SK-N-SH (cell line): ENCODE measurements at regions of chr1 and their contacts with region 1.

Region 1: DNA sequence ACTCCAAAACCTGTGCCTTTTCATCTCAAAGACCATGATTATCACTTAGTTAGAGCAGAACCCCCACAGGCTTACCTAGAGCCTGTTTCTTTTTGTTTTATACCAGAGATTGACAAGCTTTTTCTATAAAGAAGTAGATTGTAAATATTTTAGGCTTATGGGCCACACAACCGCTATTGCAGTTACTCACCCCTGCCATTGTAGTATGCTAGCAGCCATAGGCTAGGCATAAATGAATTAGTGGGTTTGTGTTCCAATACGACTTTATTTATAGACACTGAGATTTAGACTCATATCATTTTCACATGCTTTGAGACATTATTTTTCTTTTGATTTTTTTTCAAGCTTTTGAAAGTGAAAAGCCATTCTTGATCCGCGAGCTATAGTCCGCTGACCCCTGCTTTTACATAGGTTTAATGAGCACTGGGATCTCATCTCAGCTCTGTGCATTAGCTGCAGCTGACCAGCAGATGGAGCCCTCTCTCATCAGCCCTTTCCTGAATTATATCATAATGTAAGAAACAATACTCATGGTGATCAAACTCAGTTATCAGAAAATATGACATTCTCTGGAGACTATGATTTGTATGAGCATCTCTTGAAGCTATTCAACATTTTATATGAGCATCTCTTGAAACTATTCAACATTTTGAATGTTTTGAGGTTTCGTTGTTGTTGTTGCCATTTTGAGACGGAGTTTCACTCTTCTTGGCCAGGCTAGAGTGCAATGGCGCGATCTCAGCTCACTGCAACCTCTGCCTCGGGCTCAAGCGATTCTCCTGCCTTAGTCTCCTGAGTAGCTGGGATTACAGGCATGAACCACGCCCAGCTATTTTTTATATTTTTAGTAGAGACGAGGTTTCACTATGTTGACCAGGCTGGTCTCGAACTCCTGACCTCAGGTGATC is 111.9 kb upstream of the L1TD1 start:
- DNase-seq: peak; percentile 66
- H3K4me3 ChIP-seq: peak overlapping the region in 1 of 2 experiments; percentile 16; a peak in 1 of 4 replicates
- H3K27ac ChIP-seq: no peak overlapping the region
- H3K4me1 ChIP-seq: no peaks in the 10 kb centered on the region
- H3K27me3 ChIP-seq: no peaks in the 10 kb centered on the region
- CTCF ChIP-seq: peak; percentile 98
- EP300 ChIP-seq: no peak
- RAD21 ChIP-seq: peak; percentile 74

Region 2: DNA sequence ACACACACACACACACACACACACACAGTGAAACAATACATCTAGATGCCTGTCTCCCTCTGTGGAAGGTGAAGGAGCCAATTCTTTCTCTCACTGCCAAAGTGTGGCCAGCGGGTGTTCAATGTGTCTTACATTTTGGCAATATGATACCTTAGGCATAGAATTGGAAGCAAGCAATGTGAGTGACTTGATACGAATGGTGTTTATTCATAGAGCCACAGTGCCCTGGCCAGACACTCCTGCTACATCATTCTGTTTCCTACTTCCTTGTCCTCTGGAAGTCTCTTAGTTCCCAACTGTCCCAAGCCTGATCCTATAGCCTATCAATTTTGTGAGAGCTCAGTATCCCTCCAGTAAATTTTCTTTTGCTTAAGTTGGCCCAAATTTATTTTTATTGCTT is 58.0 kb before region 1 on chr1:
- CTCF ChIA-PET with region 1: no interaction called
- POLR2A ChIA-PET with region 1: no interaction called
- DNase-seq: no peak
- H3K4me3 ChIP-seq: no peak overlapping the region
- H3K27ac ChIP-seq: no peak overlapping the region
- H3K4me1 ChIP-seq: no peaks in the 10 kb centered on the region; a peak in 2 of 4 replicates
- H3K27me3 ChIP-seq: no peaks in the 10 kb centered on the region
- CTCF ChIP-seq: no peak
- EP300 ChIP-seq: no peak
- RAD21 ChIP-seq: no peak

Region 3: GRCh38 chr1:62070384-62071011 is 12.2 kb before region 1 on chr1:
- CTCF ChIA-PET with region 1: interaction called, 11 read pairs
- POLR2A ChIA-PET with region 1: no interaction called
- DNase-seq: peak; percentile 39
- H3K4me3 ChIP-seq: no peak overlapping the region; a peak in 1 of 4 replicates
- H3K27ac ChIP-seq: no peak overlapping the region
- H3K4me1 ChIP-seq: no peaks in the 10 kb centered on the region
- H3K27me3 ChIP-seq: no peaks in the 10 kb centered on the region
- CTCF ChIP-seq: peak; percentile 76
- EP300 ChIP-seq: no peak
- RAD21 ChIP-seq: peak; percentile 81

Region 4: DNA sequence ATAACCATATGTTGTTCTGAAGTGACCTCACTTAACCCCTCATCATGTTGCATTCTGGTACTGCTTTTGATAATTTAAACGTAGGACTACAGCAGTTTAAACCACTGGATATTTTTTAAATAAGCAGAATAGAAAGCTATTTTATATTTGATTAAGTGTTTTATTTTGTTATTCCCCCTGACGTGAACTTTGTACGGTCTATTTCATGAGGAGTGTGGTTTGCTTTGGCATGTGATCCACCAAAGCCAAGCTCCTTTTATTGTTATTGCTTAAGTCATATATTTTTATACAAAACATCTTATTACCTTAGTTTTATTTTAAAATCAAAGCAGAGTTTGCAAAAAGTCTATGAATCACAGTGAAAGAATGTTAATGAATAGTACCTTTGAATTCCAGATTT is 10.6 kb after region 1 on chr1:
- CTCF ChIA-PET with region 1: interaction called, 47 read pairs
- POLR2A ChIA-PET with region 1: no interaction called
- DNase-seq: no peak
- H3K4me3 ChIP-seq: no peak overlapping the region
- H3K27ac ChIP-seq: no peak overlapping the region
- H3K4me1 ChIP-seq: no peaks in the 10 kb centered on the region
- H3K27me3 ChIP-seq: no peaks in the 10 kb centered on the region
- CTCF ChIP-seq: no peak
- EP300 ChIP-seq: no peak
- RAD21 ChIP-seq: no peak

Region 5: GRCh38 chr1:62117018-62117750 is 34.5 kb after region 1 on chr1:
- CTCF ChIA-PET with region 1: interaction called, 10 read pairs
- POLR2A ChIA-PET with region 1: no interaction called
- DNase-seq: no peak
- H3K4me3 ChIP-seq: no peak overlapping the region
- H3K27ac ChIP-seq: no peak overlapping the region
- H3K4me1 ChIP-seq: peaks cover 0 to 3% of the 10 kb centered on the region in 2 experiments; a peak in 1 of 4 replicates
- H3K27me3 ChIP-seq: no peaks in the 10 kb centered on the region
- CTCF ChIP-seq: no peak
- EP300 ChIP-seq: peak in 1 of 2 experiments; percentile 30; a peak in 1 of 4 replicates
- RAD21 ChIP-seq: no peak

Region 6: GRCh38 chr1:62131093-62131725 is 48.5 kb after region 1 on chr1:
- CTCF ChIA-PET with region 1: interaction called, 24 read pairs
- POLR2A ChIA-PET with region 1: no interaction called
- DNase-seq: peak; percentile 66
- H3K4me3 ChIP-seq: peak overlapping the region in 1 of 2 experiments; percentile 38; a peak in 1 of 4 replicates
- H3K27ac ChIP-seq: no peak overlapping the region
- H3K4me1 ChIP-seq: no peaks in the 10 kb centered on the region; a peak in 1 of 4 replicates
- H3K27me3 ChIP-seq: no peaks in the 10 kb centered on the region
- CTCF ChIP-seq: peak; percentile 73
- EP300 ChIP-seq: no peak
- RAD21 ChIP-seq: peak; percentile 75